ENCODE measurements at regions of chr2 and their contacts with region 1.

Region 1: DNA sequence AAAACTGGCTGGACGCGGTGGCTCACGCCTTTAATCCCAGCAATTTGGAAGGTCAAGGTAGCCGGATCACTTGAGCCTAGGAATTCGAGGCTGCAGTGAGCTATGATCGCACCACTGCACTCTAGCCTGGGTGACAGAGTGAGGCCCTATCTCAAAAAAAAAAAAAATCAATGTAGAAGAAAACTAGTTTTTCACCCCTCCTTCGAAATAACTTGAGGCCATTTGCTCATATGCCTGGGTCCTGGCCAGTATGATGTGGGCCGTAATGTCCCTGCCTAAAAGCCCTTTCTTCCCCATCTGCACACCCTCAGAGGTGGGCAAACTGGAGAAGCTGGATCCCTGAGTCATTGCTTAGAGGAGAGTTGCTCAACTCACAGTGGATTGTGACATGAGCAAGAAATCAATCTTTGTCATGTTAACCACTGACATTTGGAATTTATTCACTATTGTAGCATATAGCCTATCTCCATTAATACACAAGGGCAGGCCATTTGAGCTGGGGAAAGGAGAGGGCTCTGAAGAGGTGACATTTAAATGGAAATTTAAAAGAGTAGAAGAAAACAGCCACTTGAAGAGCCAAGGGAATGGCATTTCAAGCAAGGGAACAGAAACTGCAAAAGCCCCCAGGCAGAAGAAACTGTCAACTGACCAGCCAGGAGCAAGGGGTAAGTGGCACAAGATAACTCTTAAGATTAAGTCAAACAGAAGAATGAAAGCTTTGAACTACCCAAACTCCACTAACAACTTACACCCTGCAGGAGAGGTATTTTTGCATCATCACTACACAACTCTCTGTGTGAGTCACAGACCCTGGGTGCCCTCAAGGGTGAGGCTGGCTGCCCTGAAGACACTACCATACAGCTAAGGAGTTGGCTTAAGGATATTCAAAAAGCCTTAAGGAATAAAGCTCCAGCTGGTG is 7.6 kb upstream of the METTL21A start:
- DNase-seq: no peak
- ATAC-seq: no peak
- H3K4me3 ChIP-seq: no peak overlapping the region
- H3K27ac ChIP-seq: peak overlapping the region in 1 of 12 donors; percentile 20
- H3K4me1 ChIP-seq: peaks cover 0 to 10% (median 0%) of the 10 kb centered on the region in 12 donors
- H3K27me3 ChIP-seq: no peaks in the 10 kb centered on the region
- CTCF ChIP-seq: no peak
- POLR2A ChIP-seq: no peak

Region 2: DNA sequence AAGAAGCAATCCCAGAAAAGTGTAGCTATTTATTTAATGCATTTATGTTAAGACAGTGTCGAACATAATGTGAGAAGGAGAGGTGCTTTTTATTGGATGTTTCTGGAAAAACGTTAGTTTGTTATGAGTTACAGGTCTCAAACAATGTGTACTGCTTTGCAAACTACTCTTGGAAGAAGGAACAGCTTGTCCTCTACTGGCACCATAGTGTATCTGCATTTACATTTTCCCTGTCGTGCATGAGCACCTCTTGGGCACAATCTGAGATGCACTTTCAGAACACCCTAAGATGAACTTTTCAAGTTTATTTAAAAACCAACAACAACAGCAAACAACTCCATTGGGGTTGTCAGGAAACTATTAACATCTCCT is 101.4 kb after region 1 on chr2:
- intact Hi-C with region 1: loop called in 4 of 10 experiments (anchors 5 to 10 kb)
- DNase-seq: no peak
- ATAC-seq: peak; percentile 59 to 81 (median 70)
- H3K4me3 ChIP-seq: no peak overlapping the region
- H3K27ac ChIP-seq: no peak overlapping the region
- H3K4me1 ChIP-seq: no peaks in the 10 kb centered on the region
- H3K27me3 ChIP-seq: no peaks in the 10 kb centered on the region
- CTCF ChIP-seq: peak; percentile 22 to 56 (median 38)
- POLR2A ChIP-seq: no peak

Region 3: GRCh38 chr2:208072250-208072892 is 439.5 kb after region 1 on chr2:
- intact Hi-C with region 1: loop called in 1 of 10 experiments (anchors 10 kb)
- DNase-seq: peak in 4 of 5 donors; percentile 42 to 52 (median 49)
- ATAC-seq: peak in 3 of 4 donors; percentile 65 to 80 (median 77)
- H3K4me3 ChIP-seq: no peak overlapping the region
- H3K27ac ChIP-seq: no peak overlapping the region
- H3K4me1 ChIP-seq: peaks cover 0 to 6% (median 0%) of the 10 kb centered on the region in 12 donors
- H3K27me3 ChIP-seq: peaks cover 0 to 23% (median 0%) of the 10 kb centered on the region in 9 donors
- CTCF ChIP-seq: peak; percentile 64 to 89 (median 75)
- POLR2A ChIP-seq: no peak